Posterior cingulate gyrus (tissue), 11 donors: ENCODE measurements at regions of chr11 and their contacts with region 1.

Region 1: GRCh38 chr11:122108192-122108799 is 7.7 kb downstream of the BLID start:
- DNase-seq: peak in 1 of 10 donors; percentile 69

Region 2: GRCh38 chr11:122159173-122159721 is 51.0 kb after region 1 on chr11:
- intact Hi-C with region 1: loop called (anchors 5 kb)
- DNase-seq: peak in 7 of 10 donors; percentile 38 to 85 (median 54)

Region 3: DNA sequence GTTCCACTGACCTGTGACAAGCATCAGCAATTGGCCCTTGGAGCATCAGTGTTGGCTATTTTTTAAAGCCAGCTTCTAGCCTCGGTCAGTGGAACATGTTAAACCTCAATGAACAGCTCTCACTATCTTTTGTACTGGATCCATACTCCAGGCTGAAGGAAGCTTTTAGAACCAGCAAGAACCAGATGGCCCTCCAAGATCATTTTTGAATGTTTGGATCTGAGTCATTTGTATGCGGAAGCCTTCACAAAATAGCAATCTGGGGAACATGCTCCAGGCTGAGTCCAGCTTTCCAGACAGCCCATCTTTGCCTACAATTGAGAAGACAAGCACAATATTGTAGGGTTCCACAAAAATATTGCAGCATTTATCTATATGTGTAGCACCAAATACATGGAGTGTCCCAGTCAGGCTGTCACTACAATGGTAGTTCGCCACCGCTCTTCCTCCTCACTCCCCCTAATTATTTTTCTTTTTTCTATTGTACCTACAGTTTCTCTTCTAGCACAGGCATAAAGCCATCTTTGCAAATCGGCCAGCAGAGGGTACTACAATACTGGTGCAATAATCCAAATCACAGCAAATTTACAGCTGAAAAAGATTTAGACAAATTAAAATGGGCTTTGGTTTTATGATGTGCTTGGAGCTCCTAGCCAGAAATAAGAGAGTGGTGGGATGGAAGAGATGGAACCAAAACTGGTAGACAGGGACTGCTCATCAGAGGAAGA is 185.2 kb after region 1 on chr11:
- intact Hi-C with region 1: loop called (anchors 5 kb)
- DNase-seq: peak in 1 of 10 donors; percentile 24